ENCODE measurements at regions of chr21 and their contacts with region 1.

Region 1: GRCh38 chr21:44478124-44478800 is 23.0 kb downstream of the LRRC3 start:
- DNase-seq: no peak
- H3K4me3 Mint-ChIP-seq: no peak overlapping the region
- H3K27ac Mint-ChIP-seq: no peak overlapping the region
- H3K4me1 Mint-ChIP-seq: peaks cover 12% of the 10 kb centered on the region
- H3K27me3 Mint-ChIP-seq: peaks cover 3% of the 10 kb centered on the region

Region 2: DNA sequence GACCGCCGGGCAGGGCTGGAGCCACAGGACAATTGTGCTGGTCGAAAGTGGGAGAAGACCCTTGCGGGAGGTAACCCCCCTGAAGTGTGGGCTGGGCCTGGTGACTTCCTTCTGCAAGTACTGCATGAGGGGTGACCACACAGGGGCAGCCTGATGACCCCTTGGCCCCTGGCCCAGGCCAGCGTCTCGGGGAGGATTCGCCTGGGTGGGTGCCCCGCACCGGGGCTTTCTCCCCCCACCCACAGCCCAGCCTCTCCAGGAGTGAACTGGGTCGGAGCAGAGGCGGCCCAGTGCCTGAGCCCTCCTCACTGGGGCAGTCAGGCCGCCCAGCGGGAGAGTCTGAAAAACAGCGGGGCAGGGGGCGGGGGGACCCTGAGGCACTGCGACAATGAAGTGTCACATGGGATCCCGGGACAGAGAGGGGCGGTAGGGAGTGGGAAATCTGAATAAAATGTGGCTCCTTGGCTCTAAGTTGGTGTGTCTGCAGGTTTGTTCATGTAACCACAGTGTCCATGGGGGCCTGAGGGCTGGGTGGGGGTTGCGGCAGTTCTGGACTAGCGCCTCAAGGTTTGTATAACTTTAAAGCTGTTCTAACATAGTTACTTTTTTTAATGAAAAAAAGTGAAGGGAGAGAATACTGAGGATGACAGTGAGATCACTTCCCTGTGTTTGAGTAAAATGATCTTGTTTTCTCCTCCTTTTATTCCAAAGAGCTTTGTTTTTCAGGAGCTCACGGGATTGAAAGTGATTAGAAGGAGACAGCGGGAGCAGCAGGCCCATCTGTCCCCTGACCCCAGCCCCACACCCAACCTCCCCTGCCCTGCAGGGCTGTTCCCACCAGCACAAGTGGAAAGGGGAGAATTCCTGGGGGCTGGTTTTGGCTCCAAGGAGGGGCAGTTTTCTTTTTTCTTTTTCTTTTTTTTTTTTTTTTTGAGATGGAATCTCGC is 214.8 kb before region 1 on chr21:
- intact Hi-C with region 1: no loop called
- DNase-seq: no peak
- H3K4me3 Mint-ChIP-seq: no peak overlapping the region
- H3K27ac Mint-ChIP-seq: no peak overlapping the region
- H3K4me1 Mint-ChIP-seq: no peaks in the 10 kb centered on the region
- H3K27me3 Mint-ChIP-seq: no peaks in the 10 kb centered on the region

Region 3: GRCh38 chr21:44353191-44353970 is 124.9 kb before region 1 on chr21 and contains the start of gene TRPM2:
- intact Hi-C with region 1: loop called (anchors 5 kb)
- DNase-seq: peak; percentile 24
- H3K4me3 Mint-ChIP-seq: peak within 1 kb of the TSS; percentile 81
- H3K27ac Mint-ChIP-seq: peak within 1 kb of the TSS; percentile 88
- H3K4me1 Mint-ChIP-seq: peaks cover 50% of the 10 kb centered on the region
- H3K27me3 Mint-ChIP-seq: peaks cover 19% of the 10 kb centered on the region
- total RNA-seq, gene TRPM2: 11.6 and 15.2 TPM in 2 replicates

Region 4: GRCh38 chr21:44402323-44403105 is 75.7 kb before region 1 on chr21:
- intact Hi-C with region 1: no loop called
- DNase-seq: no peak
- H3K4me3 Mint-ChIP-seq: no peak overlapping the region
- H3K27ac Mint-ChIP-seq: no peak overlapping the region
- H3K4me1 Mint-ChIP-seq: no peaks in the 10 kb centered on the region
- H3K27me3 Mint-ChIP-seq: no peaks in the 10 kb centered on the region